Activated CD4-positive, alpha-beta memory T cell treated with anti-CD3 and anti-CD28 coated beads for 36 hours (primary cell): ENCODE measurements at regions of chr14 and their contacts with region 1.

Region 1: GRCh38 chr14:106530423-106531107 is 1004.2 kb downstream of the TMEM121 start:
- DNase-seq: peak; percentile 55
- H3K4me3 Mint-ChIP-seq: no peak overlapping the region
- H3K27ac Mint-ChIP-seq: no peak overlapping the region
- H3K4me1 Mint-ChIP-seq: no peaks in the 10 kb centered on the region
- H3K27me3 Mint-ChIP-seq: peaks cover 27% of the 10 kb centered on the region

Region 2: GRCh38 chr14:106436310-106436905 is 94.2 kb before region 1 on chr14:
- CTCF ChIA-PET with region 1: interaction called, 19 read pairs
- POLR2A ChIA-PET with region 1: no interaction called
- intact Hi-C with region 1: no loop called
- DNase-seq: peak; percentile 65
- H3K4me3 Mint-ChIP-seq: no peak overlapping the region
- H3K27ac Mint-ChIP-seq: no peak overlapping the region
- H3K4me1 Mint-ChIP-seq: no peaks in the 10 kb centered on the region
- H3K27me3 Mint-ChIP-seq: peaks cover 30% of the 10 kb centered on the region

Region 3: DNA sequence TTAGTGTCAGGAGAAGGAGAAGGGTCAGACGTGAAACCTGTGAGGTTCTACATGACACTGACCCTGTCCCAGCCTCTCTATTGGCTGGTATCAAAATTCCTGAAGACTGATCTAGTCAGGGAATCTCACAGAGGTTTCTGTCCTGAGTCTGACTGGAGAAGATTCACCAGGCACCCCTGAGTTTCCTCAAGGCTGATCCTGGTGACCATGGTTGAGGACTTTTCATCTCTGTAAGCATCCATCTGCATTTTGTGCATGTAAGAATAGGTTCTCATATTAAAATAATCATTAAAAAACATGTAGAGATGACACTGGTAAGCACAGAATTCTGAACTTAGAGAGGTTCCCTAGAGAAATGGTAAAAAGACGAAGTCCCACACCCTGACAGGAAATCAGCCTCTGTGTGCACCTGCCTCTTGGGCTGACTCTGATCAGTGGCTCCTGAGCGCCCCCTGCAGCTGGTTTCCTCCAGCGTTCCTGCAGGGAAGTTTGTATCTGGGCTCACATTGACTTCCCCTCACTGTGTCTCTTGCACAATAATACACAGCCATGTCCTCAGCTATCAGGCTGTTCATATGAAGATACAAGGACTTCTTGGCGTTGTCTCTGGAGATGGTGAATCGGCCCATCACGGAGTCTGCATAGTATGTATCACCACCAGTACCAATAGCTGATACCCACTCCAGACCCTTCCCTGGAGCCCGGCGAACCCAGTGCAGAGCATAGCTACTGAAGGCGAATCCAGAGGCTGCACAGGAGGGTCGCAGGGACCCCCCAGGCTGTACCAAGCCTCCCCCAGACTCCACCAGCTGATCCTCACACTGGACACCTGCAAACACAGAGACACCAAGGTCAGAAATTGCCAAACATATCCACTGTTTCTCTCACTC is 12.3 kb before region 1 on chr14:
- CTCF ChIA-PET with region 1: interaction called, 63 read pairs
- POLR2A ChIA-PET with region 1: no interaction called
- intact Hi-C with region 1: no loop called
- DNase-seq: peak; percentile 89
- H3K4me3 Mint-ChIP-seq: no peak overlapping the region
- H3K27ac Mint-ChIP-seq: no peak overlapping the region
- H3K4me1 Mint-ChIP-seq: peaks cover 15% of the 10 kb centered on the region
- H3K27me3 Mint-ChIP-seq: peaks cover 10% of the 10 kb centered on the region

Region 4: GRCh38 chr14:106556665-106557289 is 26.2 kb after region 1 on chr14:
- CTCF ChIA-PET with region 1: interaction called, 47 read pairs
- POLR2A ChIA-PET with region 1: no interaction called
- intact Hi-C with region 1: no loop called
- DNase-seq: peak; percentile 84
- H3K4me3 Mint-ChIP-seq: no peak overlapping the region
- H3K27ac Mint-ChIP-seq: no peak overlapping the region
- H3K4me1 Mint-ChIP-seq: no peaks in the 10 kb centered on the region
- H3K27me3 Mint-ChIP-seq: peaks cover 18% of the 10 kb centered on the region

Region 5: GRCh38 chr14:106578481-106578880 is 47.9 kb after region 1 on chr14:
- CTCF ChIA-PET with region 1: no interaction called
- POLR2A ChIA-PET with region 1: no interaction called
- intact Hi-C with region 1: no loop called
- DNase-seq: no peak
- H3K4me3 Mint-ChIP-seq: no peak overlapping the region
- H3K27ac Mint-ChIP-seq: no peak overlapping the region
- H3K4me1 Mint-ChIP-seq: no peaks in the 10 kb centered on the region
- H3K27me3 Mint-ChIP-seq: peaks cover 27% of the 10 kb centered on the region

Region 6: GRCh38 chr14:106599209-106599608 is 68.6 kb after region 1 on chr14:
- CTCF ChIA-PET with region 1: no interaction called
- POLR2A ChIA-PET with region 1: no interaction called
- intact Hi-C with region 1: no loop called
- DNase-seq: no peak
- H3K4me3 Mint-ChIP-seq: no peak overlapping the region
- H3K27ac Mint-ChIP-seq: no peak overlapping the region
- H3K4me1 Mint-ChIP-seq: no peaks in the 10 kb centered on the region
- H3K27me3 Mint-ChIP-seq: peaks cover 45% of the 10 kb centered on the region

Region 7: GRCh38 chr14:106631879-106632278 is 101.3 kb after region 1 on chr14:
- CTCF ChIA-PET with region 1: no interaction called
- POLR2A ChIA-PET with region 1: no interaction called
- intact Hi-C with region 1: no loop called
- DNase-seq: no peak
- H3K4me3 Mint-ChIP-seq: no peak overlapping the region
- H3K27ac Mint-ChIP-seq: no peak overlapping the region
- H3K4me1 Mint-ChIP-seq: peaks cover 3% of the 10 kb centered on the region
- H3K27me3 Mint-ChIP-seq: peaks cover 16% of the 10 kb centered on the region